ENCODE measurements at regions of chr7 and their contacts with region 1.

Region 1: DNA sequence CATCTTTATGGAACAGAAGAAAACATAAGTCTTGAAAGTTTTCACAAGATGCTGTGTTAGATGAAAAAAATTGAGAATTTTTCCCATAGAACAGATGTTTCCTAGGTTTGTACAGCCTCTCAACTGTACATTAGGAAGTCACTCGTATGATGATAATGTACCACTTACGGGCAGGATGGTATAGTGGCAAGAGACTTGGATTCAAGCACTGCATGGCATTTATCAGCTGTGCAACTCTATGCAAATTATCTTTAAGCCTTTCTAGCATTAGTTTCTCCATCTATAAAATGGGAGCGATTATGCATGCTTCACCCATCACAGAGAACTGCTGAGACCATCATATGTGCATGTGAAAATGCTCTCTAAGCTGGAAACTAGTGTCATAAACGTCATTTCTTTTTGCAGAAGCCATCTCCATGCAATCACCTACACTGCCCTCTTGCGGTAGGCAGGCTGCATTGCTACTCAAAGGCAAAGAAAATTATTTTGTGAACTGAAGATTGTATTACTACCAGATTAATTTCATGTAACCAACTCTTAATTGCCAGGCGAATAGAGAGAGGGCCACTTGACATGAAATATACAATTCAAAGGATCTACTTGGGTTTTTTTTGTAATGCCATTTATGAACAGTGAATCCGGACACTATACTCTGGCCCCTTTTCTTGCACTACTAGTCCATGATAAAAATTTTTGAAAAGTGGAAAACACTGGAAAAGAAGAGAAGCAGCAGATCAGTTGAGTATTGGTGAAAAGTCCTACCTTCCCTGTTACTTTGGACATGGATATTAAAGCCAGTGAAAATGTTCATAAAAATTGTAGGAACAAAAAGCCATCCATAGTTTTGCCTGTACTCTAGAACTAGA is 102.3 kb downstream of the JAZF1 start:
- DNase-seq: no peak
- H3K4me3 ChIP-seq: no peak overlapping the region
- H3K27ac ChIP-seq: no peak overlapping the region
- H3K4me1 ChIP-seq: peaks cover 18 to 64% (median 53%) of the 10 kb centered on the region in 4 donors
- H3K27me3 ChIP-seq: no peaks in the 10 kb centered on the region
- CTCF ChIP-seq: peak in 2 of 3 experiments; percentile 94 to 96
- EP300 ChIP-seq: no peak
- POLR2A ChIP-seq: no peak

Region 2: DNA sequence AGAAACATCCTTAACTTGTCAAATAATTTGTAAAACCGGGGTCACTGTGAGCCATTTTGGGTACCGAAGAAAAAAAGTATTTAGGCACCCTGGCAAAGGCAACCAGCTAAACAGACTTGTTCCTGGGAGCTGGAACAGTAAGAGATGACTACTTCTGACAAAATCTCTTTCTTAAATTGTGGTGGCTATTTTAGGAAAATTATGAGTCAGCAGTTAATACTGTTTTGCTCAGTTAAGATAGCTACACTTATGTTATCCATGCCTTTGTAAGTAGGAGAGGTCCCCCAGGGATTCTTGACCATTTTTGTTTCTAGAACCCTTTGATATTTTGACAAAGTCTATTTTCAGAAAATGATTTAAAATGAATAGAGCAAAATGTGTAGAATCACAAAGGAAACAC is 269.6 kb before region 1 on chr7:
- intact Hi-C with region 1: no loop called
- DNase-seq: no peak
- H3K4me3 ChIP-seq: no peak overlapping the region
- H3K27ac ChIP-seq: no peak overlapping the region
- H3K4me1 ChIP-seq: peaks cover 6 to 13% (median 12%) of the 10 kb centered on the region in 4 donors
- H3K27me3 ChIP-seq: no peaks in the 10 kb centered on the region
- CTCF ChIP-seq: no peak
- EP300 ChIP-seq: no peak
- POLR2A ChIP-seq: no peak

Region 3: DNA sequence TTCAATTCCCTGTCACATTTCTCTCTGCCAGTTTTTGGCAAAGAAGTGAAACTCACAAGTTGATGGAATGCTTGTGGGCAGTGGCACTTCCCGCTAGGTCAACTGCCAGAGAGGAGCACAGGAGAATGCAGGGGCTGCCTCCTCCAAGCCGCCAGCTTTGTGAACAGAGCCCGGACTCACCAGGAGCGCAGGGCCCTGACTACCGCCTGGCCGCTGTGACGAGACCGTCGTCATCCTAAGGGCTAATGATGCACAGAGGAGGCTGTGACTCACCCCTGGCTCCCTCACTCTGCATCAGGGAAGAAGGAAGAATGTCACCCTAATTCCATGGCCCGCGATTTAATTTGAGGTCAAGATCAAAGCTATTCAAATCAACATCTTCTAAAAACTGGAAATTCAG is 214.4 kb before region 1 on chr7:
- intact Hi-C with region 1: no loop called
- DNase-seq: no peak
- H3K4me3 ChIP-seq: no peak overlapping the region
- H3K27ac ChIP-seq: no peak overlapping the region
- H3K4me1 ChIP-seq: no peaks in the 10 kb centered on the region
- H3K27me3 ChIP-seq: no peaks in the 10 kb centered on the region
- CTCF ChIP-seq: no peak
- EP300 ChIP-seq: no peak
- POLR2A ChIP-seq: no peak

Region 4: DNA sequence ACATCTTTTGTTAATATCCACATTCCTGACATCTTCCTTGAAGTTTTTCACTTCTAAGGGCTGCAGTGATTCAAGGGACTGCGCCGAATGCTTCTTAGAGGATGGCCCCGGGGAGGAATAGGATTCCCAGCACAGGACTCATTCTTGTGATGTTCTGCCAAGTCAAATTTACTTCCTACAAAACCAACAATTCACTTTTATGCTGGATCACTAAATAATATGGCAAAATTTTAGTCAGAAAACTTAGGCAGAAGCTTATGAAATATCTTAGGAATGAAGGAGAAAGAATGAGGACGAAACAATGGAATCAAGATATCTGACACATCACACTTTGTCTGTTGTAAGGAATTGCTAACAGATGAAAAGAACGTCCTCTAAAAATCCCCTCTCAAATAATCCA is 49.2 kb before region 1 on chr7:
- intact Hi-C with region 1: loop called (anchors 5 kb)
- DNase-seq: no peak
- H3K4me3 ChIP-seq: no peak overlapping the region
- H3K27ac ChIP-seq: no peak overlapping the region
- H3K4me1 ChIP-seq: peaks cover 12 to 50% (median 44%) of the 10 kb centered on the region in 4 donors
- H3K27me3 ChIP-seq: no peaks in the 10 kb centered on the region
- CTCF ChIP-seq: no peak
- EP300 ChIP-seq: no peak
- POLR2A ChIP-seq: no peak

Measured in esophagus muscularis mucosa (tissue), 4 donors.